ENCODE measurements at regions of chr13 and their contacts with region 1.

Region 1: DNA sequence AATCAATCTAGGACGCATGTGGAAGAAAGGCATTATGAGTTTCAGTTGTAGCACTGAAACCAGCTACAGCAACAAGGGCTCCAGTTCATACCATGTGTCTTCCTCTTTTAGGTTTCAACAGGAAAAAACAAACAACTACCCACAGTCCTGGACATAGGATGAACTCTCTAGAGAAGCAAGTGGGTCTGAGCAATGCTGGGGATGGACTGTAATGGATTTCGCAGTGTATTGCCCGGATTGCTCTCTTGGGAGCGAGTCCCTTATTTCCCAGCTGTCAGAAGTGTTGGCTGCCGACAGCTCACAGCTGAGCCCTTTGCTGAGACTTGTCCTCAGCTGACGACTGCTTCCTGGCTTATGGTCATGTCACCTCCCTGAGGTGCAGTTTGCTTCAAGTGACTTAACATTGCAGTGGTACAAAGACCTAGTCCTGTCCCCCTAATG is 12.1 kb upstream of the MYCBP2 start:
- DNase-seq: no peak
- CTCF ChIP-seq: no peak

Region 2: DNA sequence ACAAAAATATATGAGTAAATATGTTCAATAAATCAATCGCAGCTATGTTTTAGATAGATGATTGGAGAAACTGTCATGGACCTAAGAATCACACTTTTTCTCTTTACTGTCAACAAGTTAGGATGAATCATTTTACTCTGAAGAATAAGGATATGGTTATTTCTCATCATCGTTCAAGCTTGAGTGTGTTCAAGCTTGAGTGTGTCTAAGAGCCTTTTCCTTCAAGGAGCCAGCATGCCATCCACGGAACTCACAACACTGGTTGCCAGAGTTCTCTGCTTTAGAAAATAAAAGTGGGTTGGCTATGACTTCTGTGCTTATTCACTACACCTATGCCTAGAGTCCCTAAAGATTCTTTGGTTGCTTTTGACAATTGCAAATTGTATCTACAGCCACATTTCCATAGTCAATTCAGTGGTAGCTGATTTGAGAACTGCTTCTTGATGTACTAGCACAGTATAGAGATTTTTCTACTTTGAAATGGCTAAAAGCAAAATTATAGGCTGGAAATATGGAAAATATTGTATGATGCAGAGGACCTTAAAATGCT is 138.4 kb after region 1 on chr13:
- in situ Hi-C with region 1: loop called (anchors 10 kb)
- DNase-seq: peak; percentile 7
- CTCF ChIP-seq: no peak

Region 3: DNA sequence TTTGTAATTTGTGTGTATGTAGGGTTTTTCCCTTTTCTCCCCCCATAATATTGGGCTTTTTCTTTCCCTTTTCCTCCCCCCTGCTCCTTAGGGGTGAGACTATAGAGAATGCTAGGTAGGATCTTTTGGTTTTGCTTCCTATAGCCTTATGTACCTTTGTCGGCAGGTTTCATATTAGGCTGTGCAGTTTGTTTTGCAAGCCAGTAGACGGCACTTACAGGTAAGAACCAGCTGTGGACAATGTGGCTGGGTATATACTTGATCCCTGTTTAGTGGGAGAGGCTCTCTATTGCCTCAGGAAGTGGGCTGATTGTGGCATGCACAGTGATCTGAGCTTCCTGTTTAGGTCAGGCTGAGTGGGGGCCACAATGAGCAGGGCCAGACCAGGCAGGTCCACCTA is 1679.2 kb after region 1 on chr13:
- in situ Hi-C with region 1: no loop called
- DNase-seq: no peak
- CTCF ChIP-seq: peak; percentile 18

Measured in GM13977 (cell line).